Activated CD4-positive, alpha-beta T cell treated with anti-CD3 and anti-CD28 coated beads, Interleukin-2, amount 10 ng/mL, durations not matched to agents 24 days and 14 days (primary cell): ENCODE measurements at regions of chr4 and their contacts with region 1.

Region 1: DNA sequence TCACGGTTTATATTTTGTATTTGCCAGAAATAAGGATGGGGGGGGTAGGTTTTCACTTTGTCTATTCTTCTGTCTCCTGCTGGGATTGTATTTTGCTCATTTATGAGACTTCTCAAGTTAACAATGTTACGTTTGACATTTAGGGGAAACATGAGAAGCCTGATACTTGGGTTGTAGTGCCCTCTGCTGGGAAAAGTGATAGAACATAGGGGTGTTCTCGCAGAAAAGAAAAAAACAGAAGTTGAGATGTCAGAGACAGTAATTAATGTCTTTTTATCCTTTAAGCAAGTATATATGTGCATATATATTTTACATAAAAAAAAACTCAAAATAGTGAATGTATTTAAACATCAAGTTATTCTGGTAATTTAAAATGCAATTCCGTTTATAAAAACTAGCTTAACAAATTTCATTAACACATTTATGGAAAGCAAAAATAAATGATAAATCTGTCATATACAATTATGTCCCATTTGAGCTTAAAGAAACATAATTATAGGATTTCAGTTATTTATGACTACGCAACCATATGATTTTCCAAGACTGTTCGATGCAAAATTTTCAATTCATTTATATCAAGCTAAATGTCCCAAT is 46.0 kb upstream of the TMPRSS11F start:
- DNase-seq: peak; percentile 83
- H3K4me3 Mint-ChIP-seq: no peak overlapping the region
- H3K27ac Mint-ChIP-seq: no peak overlapping the region
- H3K4me1 Mint-ChIP-seq: peaks cover 1% of the 10 kb centered on the region
- H3K27me3 Mint-ChIP-seq: no peaks in the 10 kb centered on the region

Region 2: DNA sequence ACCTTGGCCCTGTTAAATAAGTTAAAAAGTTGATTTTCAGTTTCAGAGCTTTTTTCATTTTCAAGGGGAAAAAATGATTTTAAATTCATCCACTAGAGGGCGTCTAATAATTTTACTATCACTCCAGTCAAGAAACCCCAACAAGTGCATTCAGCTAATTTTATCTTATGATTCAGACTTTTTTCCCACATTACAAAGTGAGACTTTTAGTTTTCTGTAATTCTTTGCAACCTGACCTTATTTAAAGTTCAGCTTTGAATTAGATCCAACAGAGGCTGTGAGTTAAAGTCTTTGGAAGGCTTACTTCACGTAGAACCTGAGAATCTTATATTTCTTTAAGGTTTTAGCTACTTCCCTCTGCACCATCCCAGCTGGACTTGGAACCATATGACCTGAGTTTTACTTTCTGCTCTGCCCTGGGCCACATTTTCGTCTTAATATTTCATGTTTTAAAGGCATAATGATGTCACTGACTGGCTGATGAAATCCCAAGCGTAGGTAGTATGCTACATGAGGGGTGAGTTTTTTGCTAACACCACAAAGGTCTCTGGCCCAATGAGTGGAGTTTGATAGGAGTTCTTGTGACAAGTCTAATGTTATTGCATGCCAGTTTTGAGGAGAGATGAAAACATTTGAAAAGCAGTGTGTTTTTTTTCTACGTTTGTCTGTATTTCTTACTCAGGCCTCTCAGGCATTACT is 428.7 kb before region 1 on chr4:
- intact Hi-C with region 1: no loop called
- DNase-seq: no peak
- H3K4me3 Mint-ChIP-seq: no peak overlapping the region
- H3K27ac Mint-ChIP-seq: no peak overlapping the region
- H3K4me1 Mint-ChIP-seq: peaks cover 16% of the 10 kb centered on the region
- H3K27me3 Mint-ChIP-seq: no peaks in the 10 kb centered on the region

Region 3: GRCh38 chr4:67988991-67989390 is 186.7 kb before region 1 on chr4:
- intact Hi-C with region 1: loop called (anchors 1 kb)
- DNase-seq: no peak
- H3K4me3 Mint-ChIP-seq: no peak overlapping the region
- H3K27ac Mint-ChIP-seq: no peak overlapping the region
- H3K4me1 Mint-ChIP-seq: peaks cover 7% of the 10 kb centered on the region
- H3K27me3 Mint-ChIP-seq: peaks cover 9% of the 10 kb centered on the region